ENCODE measurements at regions of chr6 and their contacts with region 1.

Region 1: GRCh38 chr6:27126815-27127537 is 120.5 kb upstream of the PRSS16 start:
- DNase-seq: peak; percentile 96
- H3K4me3 ChIP-seq: peak overlapping the region; percentile 40 to 49 (median 45)
- H3K27ac ChIP-seq: peak overlapping the region; percentile 59 to 74 (median 64)
- H3K4me1 ChIP-seq: peaks cover 4 to 14% (median 12%) of the 10 kb centered on the region in 4 donors
- H3K27me3 ChIP-seq: no peaks in the 10 kb centered on the region
- CTCF ChIP-seq: peak; percentile 82 to 86 (median 85)
- EP300 ChIP-seq: no peak
- POLR2A ChIP-seq: no peak

Region 2: GRCh38 chr6:26285143-26286134 is 841.5 kb before region 1 on chr6:
- intact Hi-C with region 1: loop called (anchors 10 kb)
- DNase-seq: peak; percentile 100
- H3K4me3 ChIP-seq: peak overlapping the region; percentile 62 to 80 (median 68)
- H3K27ac ChIP-seq: peak overlapping the region; percentile 91 to 97 (median 94)
- H3K4me1 ChIP-seq: peaks cover 7 to 27% (median 21%) of the 10 kb centered on the region in 4 donors
- H3K27me3 ChIP-seq: no peaks in the 10 kb centered on the region
- CTCF ChIP-seq: no peak
- EP300 ChIP-seq: no peak
- POLR2A ChIP-seq: no peak

Region 3: DNA sequence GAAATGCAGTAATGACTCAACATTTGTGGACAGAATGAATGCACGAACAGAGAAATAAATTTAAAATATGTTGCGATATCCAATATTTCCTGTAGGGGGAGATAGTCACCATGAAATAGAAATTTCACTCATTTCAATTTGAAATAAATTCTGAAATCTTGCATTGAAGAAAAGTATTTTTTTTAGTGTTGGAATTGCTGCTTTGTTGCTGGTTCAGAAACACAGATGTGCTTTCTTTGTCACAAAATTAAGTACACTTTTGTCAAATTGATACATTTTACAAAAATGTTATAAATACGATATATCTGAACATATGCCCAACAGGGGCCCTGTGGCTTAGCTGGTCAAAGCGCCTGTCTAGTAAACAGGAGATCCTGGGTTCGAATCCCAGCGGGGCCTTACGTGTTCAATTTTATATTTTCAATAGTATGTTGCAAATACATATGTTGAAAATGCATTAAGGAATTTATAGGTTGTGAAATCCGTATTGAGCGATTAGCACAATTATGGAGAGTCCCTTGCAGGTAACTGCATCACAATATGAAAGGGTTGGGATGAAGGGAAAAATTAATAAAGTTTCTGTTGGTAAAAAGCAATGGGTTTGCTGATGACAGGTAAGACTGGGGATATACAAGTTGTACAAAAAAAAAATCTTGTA is 35.1 kb after region 1 on chr6:
- intact Hi-C with region 1: loop called (anchors 5 kb)
- DNase-seq: no peak
- H3K4me3 ChIP-seq: no peak overlapping the region
- H3K27ac ChIP-seq: no peak overlapping the region
- H3K4me1 ChIP-seq: peaks cover 0 to 18% (median 10%) of the 10 kb centered on the region in 4 donors
- H3K27me3 ChIP-seq: peaks cover 0 to 11% (median 0%) of the 10 kb centered on the region in 4 donors
- CTCF ChIP-seq: peak; percentile 69 to 73 (median 69)
- EP300 ChIP-seq: no peak
- POLR2A ChIP-seq: no peak

Region 4: DNA sequence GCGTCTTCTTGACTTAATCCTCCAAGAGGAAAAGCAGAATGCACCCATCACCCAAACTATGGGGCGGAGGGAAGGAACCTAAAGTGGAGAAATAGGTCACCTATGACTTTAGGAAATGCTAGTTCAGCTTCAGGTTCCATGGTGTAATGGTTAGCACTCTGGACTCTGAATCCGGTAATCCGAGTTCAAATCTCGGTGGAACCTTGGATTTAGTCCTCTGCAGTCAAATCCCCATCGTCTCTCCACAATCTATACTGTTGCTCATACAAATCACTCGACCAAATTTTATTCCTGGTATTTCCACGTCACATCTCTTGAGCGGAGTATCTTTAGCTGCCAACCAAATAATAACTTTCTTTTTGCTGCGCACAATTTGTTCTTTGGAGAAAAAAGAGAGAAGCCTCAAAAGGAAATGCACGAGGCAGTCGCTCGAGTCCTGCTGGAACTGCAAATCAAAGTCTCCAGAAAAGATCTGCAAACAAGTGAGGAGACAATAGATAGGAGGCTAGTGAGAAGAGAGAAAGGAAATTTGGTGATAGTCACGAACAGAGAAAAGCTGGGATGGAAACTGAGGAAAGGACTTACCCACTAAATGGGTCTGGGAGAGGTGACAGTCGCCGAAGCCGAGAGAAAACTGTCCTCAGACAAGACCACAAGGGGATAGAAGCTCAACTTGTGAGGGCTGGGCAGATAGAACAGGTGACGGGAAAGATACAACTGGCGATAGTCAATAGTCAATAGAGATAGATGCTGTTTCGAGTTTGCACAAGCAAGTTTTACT is 168.5 kb after region 1 on chr6:
- intact Hi-C with region 1: no loop called
- DNase-seq: no peak
- H3K4me3 ChIP-seq: no peak overlapping the region
- H3K27ac ChIP-seq: no peak overlapping the region
- H3K4me1 ChIP-seq: peaks cover 0 to 10% (median 1%) of the 10 kb centered on the region in 4 donors
- H3K27me3 ChIP-seq: peaks cover 0 to 100% (median 63%) of the 10 kb centered on the region in 4 donors
- CTCF ChIP-seq: no peak
- EP300 ChIP-seq: no peak
- POLR2A ChIP-seq: no peak